Gastrocnemius medialis (tissue), 4 donors: ENCODE measurements at regions of chr14 and their contacts with region 1.

Region 1: DNA sequence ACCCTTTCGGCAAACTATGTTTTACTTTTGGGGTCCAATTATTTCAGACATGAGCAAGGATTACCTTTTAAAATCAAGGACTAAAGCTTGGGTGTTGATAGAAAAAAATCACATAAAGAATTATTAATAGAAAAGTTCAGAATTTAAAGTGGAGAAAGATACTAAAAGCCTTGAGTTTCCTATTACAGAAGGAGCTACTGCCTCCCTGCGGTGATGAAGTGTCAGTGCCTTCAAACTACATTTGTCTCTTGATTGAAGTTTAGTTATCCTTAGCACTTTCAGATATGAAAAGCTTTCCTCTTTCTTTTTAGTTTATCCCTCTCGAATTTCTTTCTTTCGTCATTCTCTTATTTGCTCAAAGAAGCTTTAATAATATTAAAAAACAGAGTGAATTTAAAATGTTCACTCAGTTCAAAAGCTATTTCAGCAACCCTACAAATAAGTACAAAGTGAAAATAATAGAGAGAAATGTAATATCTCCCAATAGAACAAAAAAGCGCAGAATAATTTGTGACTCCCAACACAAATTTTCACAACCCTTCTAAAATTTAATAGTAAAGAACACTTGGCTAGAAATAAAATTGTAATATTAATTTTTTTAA is 87.6 kb downstream of the SEC23A start:
- DNase-seq: no peak
- ATAC-seq: no peak
- H3K4me3 ChIP-seq: no peak overlapping the region
- H3K27ac ChIP-seq: no peak overlapping the region
- H3K4me1 ChIP-seq: no peaks in the 10 kb centered on the region
- H3K27me3 ChIP-seq: no peaks in the 10 kb centered on the region
- CTCF ChIP-seq: peak in 4 of 5 experiments; percentile 24 to 67 (median 48)
- POLR2A ChIP-seq: no peak

Region 2: DNA sequence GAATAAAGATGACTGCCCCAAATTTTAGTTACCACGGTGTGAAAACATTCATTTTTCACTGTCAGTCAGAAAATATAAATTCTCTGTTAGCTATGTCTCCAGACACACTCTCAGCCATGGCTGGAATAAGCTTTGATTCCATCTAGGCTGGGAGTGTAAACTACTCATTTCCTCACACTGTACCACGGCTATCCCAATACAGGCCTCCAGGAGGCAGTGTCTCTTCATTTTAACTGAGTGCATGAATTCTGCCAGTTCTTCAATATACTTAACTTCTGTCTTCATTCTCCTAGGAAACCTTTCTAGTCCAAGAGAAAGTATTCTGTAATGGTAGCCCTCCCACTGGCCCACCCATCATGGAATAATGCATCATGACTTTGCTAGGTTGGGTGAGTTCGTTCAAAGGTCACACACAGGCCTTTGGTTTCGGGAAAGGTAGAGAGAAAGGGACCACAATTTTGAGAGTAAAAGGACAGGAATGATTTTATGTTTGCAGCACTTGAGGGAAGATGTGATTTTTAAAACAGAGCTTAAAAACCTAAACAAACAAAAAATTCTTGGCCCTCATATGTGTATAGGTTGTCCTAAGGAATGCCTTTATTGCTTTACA is 293.5 kb before region 1 on chr14:
- in situ Hi-C with region 1: loop called in 3 of 4 experiments (anchors 10 to 25 kb)
- intact Hi-C with region 1: loop called (anchors 5 kb)
- DNase-seq: peak in 1 of 2 donors; percentile 12
- ATAC-seq: no peak
- H3K4me3 ChIP-seq: no peak overlapping the region
- H3K27ac ChIP-seq: no peak overlapping the region
- H3K4me1 ChIP-seq: peaks cover 4 to 5% of the 10 kb centered on the region in 2 donors
- H3K27me3 ChIP-seq: no peaks in the 10 kb centered on the region
- CTCF ChIP-seq: peak; percentile 35 to 62 (median 49)
- POLR2A ChIP-seq: no peak

Region 3: DNA sequence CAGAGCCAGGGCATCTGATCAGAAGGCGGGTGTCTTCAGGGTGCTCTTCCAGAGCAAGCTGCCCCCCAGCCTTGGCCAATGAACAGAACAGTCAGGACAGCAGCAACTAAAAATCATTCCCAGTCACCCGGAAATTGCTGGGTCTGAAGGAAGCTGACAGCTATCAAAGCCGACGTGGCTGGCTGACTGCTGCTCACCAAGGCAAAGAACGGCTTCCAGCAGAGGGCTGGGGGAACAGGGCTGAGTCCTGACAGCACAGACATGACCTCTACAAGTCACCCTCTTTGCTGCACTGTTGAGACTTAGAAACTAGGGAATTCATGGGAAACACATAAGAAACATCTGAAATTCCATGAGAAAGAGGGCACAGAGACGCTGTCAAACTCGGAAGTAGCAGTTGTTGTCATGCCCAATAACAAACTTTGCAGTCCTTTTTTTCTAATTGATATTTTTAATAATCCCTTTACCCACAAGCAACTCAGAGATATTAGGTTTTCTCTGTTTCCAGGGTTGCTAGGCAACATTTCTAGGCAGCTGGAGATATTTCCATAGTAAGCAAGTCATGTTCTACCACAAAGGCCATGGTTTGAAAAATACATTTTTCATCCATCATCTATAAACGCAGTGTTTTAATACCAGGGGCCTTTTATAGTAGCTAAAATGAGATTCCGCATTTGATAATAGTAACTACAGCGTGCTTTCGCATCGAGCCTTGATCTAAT is 277.6 kb before region 1 on chr14:
- in situ Hi-C with region 1: loop called in 1 of 4 experiments (anchors 25 kb)
- intact Hi-C with region 1: no loop called
- DNase-seq: no peak
- ATAC-seq: no peak
- H3K4me3 ChIP-seq: no peak overlapping the region
- H3K27ac ChIP-seq: no peak overlapping the region
- H3K4me1 ChIP-seq: no peaks in the 10 kb centered on the region
- H3K27me3 ChIP-seq: no peaks in the 10 kb centered on the region
- CTCF ChIP-seq: no peak
- POLR2A ChIP-seq: no peak